HEK293 (cell line): ENCODE measurements at regions of chr19 and their contacts with region 1.

Region 1: GRCh38 chr19:55339048-55339888 is at the start of gene KMT5C:
- H3K4me3 ChIP-seq: peak within 1 kb of the TSS; percentile 88
- H3K27ac ChIP-seq: peak within 1 kb of the TSS; percentile 89
- H3K4me1 ChIP-seq: peaks cover 14% of the 10 kb centered on the region
- CTCF ChIP-seq: no peak; the same call in 1 of the 2 replicates

Region 2: DNA sequence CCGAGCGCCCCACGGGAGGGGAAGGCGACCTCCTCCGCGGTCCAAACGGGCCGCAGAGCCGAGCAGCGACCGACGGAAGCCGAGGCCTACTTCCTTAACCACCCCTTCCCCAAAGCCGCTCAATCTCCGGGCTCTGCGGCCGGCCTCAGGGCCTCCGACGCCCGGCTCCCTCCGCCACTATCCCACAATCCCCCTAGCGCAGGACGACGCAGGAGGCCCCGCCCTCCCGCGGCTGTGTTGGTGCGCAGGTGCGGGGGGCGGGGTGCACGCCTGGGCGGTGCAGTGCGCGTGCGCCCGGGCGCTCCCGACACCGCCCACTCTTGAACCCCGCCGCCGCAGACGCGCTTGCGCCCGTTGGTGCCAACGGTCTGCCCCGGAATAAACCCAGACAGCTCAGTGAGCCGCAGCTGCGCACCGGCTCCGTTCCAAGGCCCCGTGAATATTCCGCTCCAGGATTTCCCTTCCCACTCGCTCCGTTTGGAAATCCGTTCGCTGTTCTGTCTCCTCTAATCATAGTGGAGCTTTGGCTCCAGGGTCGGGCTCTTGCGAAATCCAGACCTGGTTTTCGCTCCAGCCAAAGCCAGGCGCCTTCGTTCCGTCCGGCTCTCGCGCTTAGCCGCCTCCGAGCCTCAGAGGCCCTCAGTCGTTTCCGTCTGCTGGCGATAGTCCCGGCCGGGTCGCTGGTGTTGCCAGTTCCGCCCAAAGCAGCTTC is 80.3 kb before region 1 on chr19 and contains the start of gene PPP6R1:
- CTCF ChIA-PET with region 1: no interaction called
- POLR2A ChIA-PET with region 1: interaction called, 15 read pairs
- H3K4me3 ChIP-seq: peak within 1 kb of the TSS; percentile 96
- H3K27ac ChIP-seq: peak within 1 kb of the TSS; percentile 94
- H3K4me1 ChIP-seq: peaks cover 28% of the 10 kb centered on the region
- CTCF ChIP-seq: no peak

Region 3: GRCh38 chr19:55301459-55302317 is 37.6 kb before region 1 on chr19:
- CTCF ChIA-PET with region 1: interaction called, 17 read pairs
- POLR2A ChIA-PET with region 1: interaction called, 9 read pairs
- H3K4me3 ChIP-seq: peak overlapping the region; percentile 18
- H3K27ac ChIP-seq: no peak overlapping the region; the same call in 1 of the 2 replicates
- H3K4me1 ChIP-seq: peaks cover 3% of the 10 kb centered on the region; the same call in 1 of the 2 replicates
- CTCF ChIP-seq: peak; percentile 93

Region 4: GRCh38 chr19:55369671-55370304 is 30.5 kb after region 1 on chr19:
- CTCF ChIA-PET with region 1: interaction called, 5 read pairs
- POLR2A ChIA-PET with region 1: interaction called, 20 read pairs
- H3K4me3 ChIP-seq: peak overlapping the region; percentile 48
- H3K27ac ChIP-seq: no peak overlapping the region
- H3K4me1 ChIP-seq: peaks cover 5% of the 10 kb centered on the region; the same call in 1 of the 2 replicates
- CTCF ChIP-seq: no peak

Region 5: DNA sequence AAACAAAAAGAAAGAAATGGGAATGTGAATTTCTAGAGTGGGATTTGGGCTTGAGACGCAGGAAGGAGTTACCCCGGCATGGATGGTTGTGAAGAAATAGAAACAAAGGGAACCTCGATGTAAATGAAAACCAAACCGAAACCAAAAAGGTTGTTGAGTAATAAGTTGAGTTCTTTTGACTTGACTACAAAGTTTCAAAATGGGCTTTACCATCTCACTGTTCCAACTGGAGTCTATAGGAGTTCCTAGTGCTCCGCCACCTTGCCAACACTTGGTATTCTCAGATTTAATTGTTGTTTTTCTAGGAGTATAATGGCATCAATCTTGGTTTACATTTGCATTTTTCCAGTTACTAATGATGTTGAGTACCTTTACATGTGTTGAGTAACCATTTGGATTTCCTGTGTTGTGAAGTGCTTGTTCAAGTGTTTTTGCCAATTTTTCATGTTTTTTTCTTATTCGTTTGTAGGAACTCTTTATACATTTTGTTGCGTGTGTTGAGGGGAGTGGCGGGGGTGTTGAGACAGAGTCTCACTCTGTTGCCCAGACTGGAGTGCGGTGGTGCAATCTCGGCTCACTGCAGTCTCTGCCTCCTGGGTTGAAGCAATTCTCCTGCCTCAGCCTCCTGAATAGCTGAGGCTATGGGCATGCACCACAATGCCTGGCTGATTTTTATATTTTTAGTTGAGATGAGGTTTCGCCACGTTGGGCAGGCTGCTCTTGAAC is 59.1 kb after region 1 on chr19:
- CTCF ChIA-PET with region 1: no interaction called
- POLR2A ChIA-PET with region 1: interaction called, 19 read pairs
- H3K4me3 ChIP-seq: no peak overlapping the region
- H3K27ac ChIP-seq: no peak overlapping the region
- H3K4me1 ChIP-seq: no peaks in the 10 kb centered on the region; the same call in 1 of the 2 replicates
- CTCF ChIP-seq: no peak

Region 6: GRCh38 chr19:55599468-55600279 is 260.4 kb after region 1 on chr19 and contains the start of gene FIZ1:
- CTCF ChIA-PET with region 1: no interaction called
- POLR2A ChIA-PET with region 1: interaction called, 10 read pairs
- H3K4me3 ChIP-seq: peak within 1 kb of the TSS; percentile 97
- H3K27ac ChIP-seq: peak within 1 kb of the TSS; percentile 97
- H3K4me1 ChIP-seq: peaks cover 3% of the 10 kb centered on the region; the same call in 1 of the 2 replicates
- CTCF ChIP-seq: no peak; the same call in 1 of the 2 replicates